B cell (primary cell): ENCODE measurements at regions of chrX and their contacts with region 1.

Region 1: DNA sequence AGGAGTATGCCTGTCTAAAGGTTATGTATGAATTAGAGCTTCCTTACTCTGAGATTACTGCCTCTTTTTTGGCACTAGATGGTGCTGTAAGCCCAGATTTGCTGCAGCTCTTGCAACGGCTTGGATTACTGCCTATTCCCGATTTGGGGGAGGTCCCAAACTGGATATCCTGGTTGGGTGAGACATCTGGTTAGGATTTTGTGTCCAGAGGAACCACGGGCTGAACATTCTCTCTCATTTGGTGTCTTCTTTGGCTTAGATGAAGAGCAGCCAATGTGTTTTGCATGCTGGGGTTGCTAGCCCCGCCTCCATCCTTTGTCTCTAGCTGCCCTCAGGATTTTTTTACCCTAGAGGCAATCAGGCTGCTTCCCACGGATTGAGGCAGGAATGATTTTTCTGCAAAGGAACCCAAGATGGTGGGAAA is 31.9 kb downstream of the F8A1 start:
- DNase-seq: peak; percentile 56
- ATAC-seq: no peak
- H3K4me3 ChIP-seq: peak overlapping the region in 3 of 5 experiments; percentile 6 to 37 (median 28)
- H3K4me3 Mint-ChIP-seq: peak overlapping the region; percentile 75
- H3K27ac ChIP-seq: no peak overlapping the region
- H3K27ac Mint-ChIP-seq: no peak overlapping the region
- H3K4me1 ChIP-seq: no peaks in the 10 kb centered on the region
- H3K4me1 Mint-ChIP-seq: no peaks in the 10 kb centered on the region
- H3K27me3 ChIP-seq: no peaks in the 10 kb centered on the region
- H3K27me3 Mint-ChIP-seq: peaks cover 12% of the 10 kb centered on the region
- CTCF ChIP-seq: peak; percentile 73

Region 2: GRCh38 chrX:154827194-154828015 is 90.7 kb before region 1 on chrX:
- CTCF ChIA-PET with region 1: no interaction called
- POLR2A ChIA-PET with region 1: no interaction called
- intact Hi-C with region 1: no loop called
- DNase-seq: peak; percentile 70
- ATAC-seq: peak; percentile 92
- H3K4me3 ChIP-seq: peak overlapping the region in 1 of 5 experiments; percentile 8
- H3K4me3 Mint-ChIP-seq: peak overlapping the region; percentile 41
- H3K27ac ChIP-seq: peak overlapping the region; percentile 71 to 75
- H3K27ac Mint-ChIP-seq: peak overlapping the region; percentile 84
- H3K4me1 ChIP-seq: peaks cover 21 to 27% of the 10 kb centered on the region in 2 donors
- H3K4me1 Mint-ChIP-seq: peaks cover 29% of the 10 kb centered on the region
- H3K27me3 ChIP-seq: no peaks in the 10 kb centered on the region
- H3K27me3 Mint-ChIP-seq: no peaks in the 10 kb centered on the region
- CTCF ChIP-seq: no peak

Region 3: GRCh38 chrX:154980330-154981096 is 62.4 kb after region 1 on chrX:
- CTCF ChIA-PET with region 1: interaction called, 4 read pairs
- POLR2A ChIA-PET with region 1: no interaction called
- intact Hi-C with region 1: loop called (anchors 2 kb)
- DNase-seq: peak; percentile 82
- ATAC-seq: peak; percentile 93
- H3K4me3 ChIP-seq: peak overlapping the region in 4 of 5 experiments; percentile 6 to 40 (median 22)
- H3K4me3 Mint-ChIP-seq: peak overlapping the region; percentile 79
- H3K27ac ChIP-seq: no peak overlapping the region
- H3K27ac Mint-ChIP-seq: no peak overlapping the region
- H3K4me1 ChIP-seq: peaks cover 0 to 9% of the 10 kb centered on the region in 2 donors
- H3K4me1 Mint-ChIP-seq: peaks cover 2% of the 10 kb centered on the region
- H3K27me3 ChIP-seq: no peaks in the 10 kb centered on the region
- H3K27me3 Mint-ChIP-seq: peaks cover 8% of the 10 kb centered on the region
- CTCF ChIP-seq: peak; percentile 72

Region 4: GRCh38 chrX:155645180-155645579 is 727.1 kb after region 1 on chrX:
- CTCF ChIA-PET with region 1: no interaction called
- POLR2A ChIA-PET with region 1: no interaction called
- intact Hi-C with region 1: loop called (anchors 5 kb)
- DNase-seq: no peak
- ATAC-seq: no peak
- H3K4me3 ChIP-seq: no peak overlapping the region
- H3K4me3 Mint-ChIP-seq: no peak overlapping the region
- H3K27ac ChIP-seq: no peak overlapping the region
- H3K27ac Mint-ChIP-seq: no peak overlapping the region
- H3K4me1 ChIP-seq: no peaks in the 10 kb centered on the region
- H3K4me1 Mint-ChIP-seq: peaks cover 6% of the 10 kb centered on the region
- H3K27me3 ChIP-seq: no peaks in the 10 kb centered on the region
- H3K27me3 Mint-ChIP-seq: peaks cover 9% of the 10 kb centered on the region
- CTCF ChIP-seq: no peak